ENCODE measurements at regions of chr1 and their contacts with region 1.

Region 1: GRCh38 chr1:203273206-203273868 is 32.0 kb upstream of the BTG2 start:
- DNase-seq: peak; percentile 82 to 97 (median 92)
- ATAC-seq: peak; percentile 66
- H3K4me3 ChIP-seq: peak overlapping the region; percentile 37 to 63
- H3K4me3 Mint-ChIP-seq: peak overlapping the region; percentile 74
- H3K27ac ChIP-seq: peak overlapping the region; percentile 10 to 48
- H3K27ac Mint-ChIP-seq: peak overlapping the region; percentile 92
- H3K4me1 ChIP-seq: peaks cover 49% of the 10 kb centered on the region
- H3K4me1 Mint-ChIP-seq: peaks cover 52% of the 10 kb centered on the region
- H3K27me3 ChIP-seq: no peaks in the 10 kb centered on the region
- H3K27me3 Mint-ChIP-seq: no peaks in the 10 kb centered on the region
- CTCF ChIP-seq: peak; percentile 94

Region 2: DNA sequence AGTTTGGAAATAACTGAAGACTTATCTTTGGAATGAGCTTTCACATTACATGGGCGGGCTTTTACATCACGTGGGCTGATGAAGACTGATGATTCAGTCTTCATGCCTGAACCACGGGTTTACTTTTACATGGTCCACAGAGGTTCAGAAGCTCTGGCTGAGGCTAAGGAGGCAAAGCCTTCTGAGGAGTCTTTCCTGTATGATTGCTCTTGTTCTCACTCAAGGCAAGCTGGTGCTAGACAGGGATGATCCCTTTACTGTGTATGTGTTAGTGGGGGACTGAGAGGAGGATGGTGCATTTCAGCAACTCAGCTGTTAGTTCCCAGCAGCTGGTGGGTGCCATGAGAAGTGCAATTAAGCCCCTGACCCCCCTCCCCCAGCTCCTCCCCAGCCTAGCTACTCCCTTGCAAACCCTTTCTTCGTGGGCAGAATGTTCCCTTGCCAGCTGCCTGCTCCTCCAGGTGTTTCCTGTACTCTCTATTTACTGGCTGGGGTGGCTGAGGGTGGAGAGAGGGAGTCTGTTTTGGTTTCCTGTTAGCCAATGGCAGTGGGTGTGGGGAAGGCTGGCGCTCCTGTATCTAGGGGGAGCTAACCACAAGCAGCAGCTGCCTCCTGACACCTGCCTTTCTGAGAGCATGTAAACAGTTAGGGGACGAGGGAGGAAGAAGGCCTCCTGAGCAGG is 47.4 kb after region 1 on chr1:
- CTCF ChIA-PET with region 1: interaction called, 207 read pairs
- POLR2A ChIA-PET with region 1: interaction called, 92 read pairs
- intact Hi-C with region 1: no loop called
- DNase-seq: peak; percentile 50 to 91 (median 82)
- ATAC-seq: peak; percentile 62
- H3K4me3 ChIP-seq: peak overlapping the region in 1 of 2 experiments; percentile 12
- H3K4me3 Mint-ChIP-seq: peak overlapping the region; percentile 69
- H3K27ac ChIP-seq: peak overlapping the region; percentile 53 to 80
- H3K27ac Mint-ChIP-seq: peak overlapping the region; percentile 93
- H3K4me1 ChIP-seq: peaks cover 73% of the 10 kb centered on the region
- H3K4me1 Mint-ChIP-seq: peaks cover 88% of the 10 kb centered on the region
- H3K27me3 ChIP-seq: no peaks in the 10 kb centered on the region
- H3K27me3 Mint-ChIP-seq: no peaks in the 10 kb centered on the region
- CTCF ChIP-seq: no peak

Region 3: DNA sequence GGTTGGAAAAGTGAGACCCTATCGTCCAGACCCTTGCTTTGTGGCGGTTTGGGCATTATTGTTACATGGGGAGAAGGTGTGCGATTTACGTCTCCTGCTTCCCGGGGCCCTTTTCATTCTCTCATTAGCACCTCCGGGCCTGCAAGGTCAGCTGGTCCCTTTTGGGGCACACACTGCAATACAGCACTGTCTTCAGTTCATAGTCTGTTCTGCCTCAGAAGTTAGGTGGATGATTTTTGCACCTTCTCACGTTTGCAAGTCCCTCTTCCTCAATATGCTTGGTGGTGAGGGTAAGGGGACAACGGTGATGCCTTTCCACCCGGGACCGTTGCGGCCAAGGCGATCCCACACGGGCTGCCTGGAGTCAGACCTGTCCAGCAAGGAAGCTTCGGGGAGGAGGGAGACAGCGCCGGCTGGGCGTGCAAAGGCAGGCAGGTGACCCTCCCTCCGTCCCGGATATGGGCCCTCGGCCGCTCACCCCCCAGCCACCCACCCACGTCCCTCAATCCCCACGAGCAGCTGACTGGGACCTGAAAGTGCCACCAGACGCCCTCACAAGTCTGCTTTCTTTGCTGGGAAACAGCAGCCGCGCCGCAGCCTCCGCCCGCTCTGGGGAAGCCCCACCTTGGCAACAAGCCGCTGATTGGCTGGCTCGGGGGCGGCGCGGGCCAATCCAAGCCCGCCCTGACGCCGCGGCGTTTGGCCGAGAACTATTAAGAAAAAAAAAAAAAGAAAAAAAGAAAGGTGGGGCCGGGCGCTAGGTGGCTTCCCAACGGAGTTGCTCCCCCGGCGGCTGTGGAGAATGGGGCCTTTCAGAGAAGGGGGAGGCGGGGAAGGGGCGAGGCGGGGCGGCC is 53.7 kb after region 1 on chr1:
- CTCF ChIA-PET with region 1: interaction called, 908 read pairs
- POLR2A ChIA-PET with region 1: interaction called, 92 read pairs
- intact Hi-C with region 1: loop called (anchors 1 kb)
- DNase-seq: peak; percentile 86 to 97 (median 94)
- ATAC-seq: peak; percentile 67
- H3K4me3 ChIP-seq: peak overlapping the region; percentile 58 to 60
- H3K4me3 Mint-ChIP-seq: peak overlapping the region; percentile 74
- H3K27ac ChIP-seq: peak overlapping the region; percentile 92 to 97
- H3K27ac Mint-ChIP-seq: peak overlapping the region; percentile 93
- H3K4me1 ChIP-seq: peaks cover 65% of the 10 kb centered on the region
- H3K4me1 Mint-ChIP-seq: peaks cover 65% of the 10 kb centered on the region
- H3K27me3 ChIP-seq: no peaks in the 10 kb centered on the region
- H3K27me3 Mint-ChIP-seq: no peaks in the 10 kb centered on the region
- CTCF ChIP-seq: no peak